Mammary epithelial cell (primary cell): ENCODE measurements at regions of chr11 and their contacts with region 1.

Region 1: GRCh38 chr11:112185883-112186282 is 10.6 kb downstream of the BCO2 start:
- DNase-seq: no peak
- H3K4me3 ChIP-seq: no peak overlapping the region
- H3K27ac ChIP-seq: no peak overlapping the region
- H3K4me1 ChIP-seq: no peaks in the 10 kb centered on the region
- H3K27me3 ChIP-seq: no peaks in the 10 kb centered on the region
- CTCF ChIP-seq: no peak

Region 2: DNA sequence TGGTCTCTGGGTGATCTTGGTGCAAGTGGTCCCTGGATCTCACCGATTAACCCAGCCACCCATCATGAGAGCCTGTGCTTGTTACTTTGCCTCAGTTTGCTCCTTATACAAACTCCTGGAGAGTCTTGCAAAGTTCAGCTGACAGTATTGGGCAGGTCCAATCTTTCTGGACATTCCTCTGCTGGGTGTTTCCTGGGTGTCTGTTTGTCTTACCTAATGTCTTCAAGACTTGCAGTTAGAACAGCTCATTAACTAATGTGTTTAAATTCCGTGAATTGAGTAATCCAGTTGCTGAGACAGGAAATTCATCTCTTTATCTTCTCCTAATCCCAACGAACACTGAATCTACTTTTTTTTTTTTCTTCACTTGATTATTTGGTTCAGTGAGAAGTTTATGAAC is 10.0 kb after region 1 on chr11:
- CTCF ChIA-PET with region 1: no interaction called
- dilution Hi-C with region 1: no loop called
- in situ Hi-C with region 1: no loop called
- intact Hi-C with region 1: loop called (anchors 1 kb)
- DNase-seq: peak; percentile 65
- H3K4me3 ChIP-seq: no peak overlapping the region
- H3K27ac ChIP-seq: peak overlapping the region; percentile 52
- H3K4me1 ChIP-seq: peaks cover 14% of the 10 kb centered on the region
- H3K27me3 ChIP-seq: no peaks in the 10 kb centered on the region
- CTCF ChIP-seq: no peak